H1 (cell line): ENCODE measurements at regions of chr20 and their contacts with region 1.

Region 1: GRCh38 chr20:54103067-54103761 is 32.8 kb upstream of the BCAS1 start:
- DNase-seq: peak; percentile 41 to 95
- H3K4me3 ChIP-seq: no peak overlapping the region
- H3K27ac ChIP-seq: no peak overlapping the region
- H3K4me1 ChIP-seq: no peaks in the 10 kb centered on the region
- H3K27me3 ChIP-seq: peaks cover 0 to 1% (median 0%) of the 10 kb centered on the region in 4 experiments; a peak in 1 of 7 replicates
- CTCF ChIP-seq: peak; percentile 82 to 91 (median 85)
- EP300 ChIP-seq: no peak
- POLR2A ChIP-seq: no peak
- RAD21 ChIP-seq: peak; percentile 64 to 72

Region 2: DNA sequence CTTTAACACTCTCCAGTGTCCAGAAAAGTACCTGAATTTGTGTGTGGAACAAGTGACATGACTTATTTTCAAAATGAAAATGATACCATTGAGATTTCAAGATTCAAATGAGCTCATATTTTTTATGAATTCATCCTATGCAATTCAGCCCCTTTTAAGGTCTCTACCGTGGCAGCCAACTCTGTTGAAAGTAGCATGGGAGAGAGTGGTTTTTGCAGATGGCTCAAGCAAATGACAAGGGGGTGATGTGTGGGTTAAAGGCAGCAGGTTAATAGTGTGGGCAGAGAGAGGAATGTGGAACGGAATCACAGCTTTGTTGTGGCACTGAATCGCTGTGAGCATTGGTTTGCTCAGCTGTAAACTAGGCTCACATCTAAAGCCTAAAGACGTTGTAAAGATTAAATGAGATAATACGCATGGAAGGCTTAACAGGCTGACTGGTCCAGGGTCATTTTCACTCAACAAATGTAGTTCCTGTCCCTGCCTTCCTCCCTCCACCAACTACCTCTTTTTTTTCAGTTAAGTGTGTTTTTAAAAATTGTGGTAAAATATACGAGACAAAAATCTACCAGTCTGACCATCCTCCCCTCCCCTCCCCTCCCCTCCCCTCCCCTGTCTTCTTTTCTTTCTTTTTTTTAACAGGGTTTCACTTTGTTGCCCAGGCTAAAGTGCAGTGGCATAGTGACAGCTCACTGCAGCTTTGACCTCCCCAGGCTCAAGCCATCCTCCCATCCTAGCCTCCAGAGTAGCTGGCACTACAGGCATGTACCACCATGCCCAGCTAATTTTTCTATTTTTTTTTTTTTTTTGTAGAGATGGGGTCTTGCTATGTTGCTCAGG is 394.9 kb before region 1 on chr20:
- CTCF ChIA-PET with region 1: no interaction called
- POLR2A ChIA-PET with region 1: no interaction called
- DNase-seq: no peak
- H3K4me3 ChIP-seq: no peak overlapping the region
- H3K27ac ChIP-seq: no peak overlapping the region
- H3K4me1 ChIP-seq: peaks cover 6 to 21% (median 14%) of the 10 kb centered on the region in 4 experiments
- H3K27me3 ChIP-seq: no peaks in the 10 kb centered on the region; a peak in 1 of 7 replicates
- CTCF ChIP-seq: no peak
- EP300 ChIP-seq: no peak
- POLR2A ChIP-seq: no peak
- RAD21 ChIP-seq: no peak

Region 3: GRCh38 chr20:54126809-54127655 is 23.8 kb after region 1 on chr20:
- CTCF ChIA-PET with region 1: interaction called, 11 read pairs
- POLR2A ChIA-PET with region 1: interaction called, 3 read pairs
- DNase-seq: no peak
- H3K4me3 ChIP-seq: no peak overlapping the region
- H3K27ac ChIP-seq: no peak overlapping the region
- H3K4me1 ChIP-seq: peaks cover 0 to 6% (median 2%) of the 10 kb centered on the region in 4 experiments; a peak in 4 of 7 replicates
- H3K27me3 ChIP-seq: no peaks in the 10 kb centered on the region
- CTCF ChIP-seq: no peak
- EP300 ChIP-seq: no peak
- POLR2A ChIP-seq: no peak
- RAD21 ChIP-seq: no peak

Region 4: DNA sequence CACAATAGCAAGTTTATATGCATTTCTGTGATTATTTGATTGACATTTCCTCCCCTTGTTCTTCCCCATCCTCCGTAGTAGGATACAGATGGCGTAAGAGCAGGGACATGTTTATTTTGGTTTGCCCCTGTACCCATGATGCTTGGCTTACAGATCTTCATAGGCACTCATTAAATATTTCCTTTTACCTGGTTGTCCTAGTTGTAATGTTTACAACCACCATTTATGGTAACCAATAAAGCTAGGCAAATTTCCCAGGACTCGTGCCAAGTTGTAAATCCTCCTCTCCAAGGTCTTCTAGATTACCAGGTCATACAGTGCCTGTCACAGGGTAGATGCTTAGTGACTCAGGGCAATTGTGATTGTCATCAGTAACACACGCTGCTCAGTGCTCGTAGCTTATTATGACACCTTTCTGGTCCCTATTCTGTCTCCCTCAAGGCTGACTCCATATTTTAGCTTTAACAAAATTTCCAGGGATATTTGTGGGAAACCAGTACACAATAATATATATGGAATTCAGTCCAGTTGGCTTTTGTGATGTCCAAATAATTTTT is 45.8 kb after region 1 on chr20:
- CTCF ChIA-PET with region 1: interaction called, 16 read pairs
- POLR2A ChIA-PET with region 1: no interaction called
- DNase-seq: no peak
- H3K4me3 ChIP-seq: no peak overlapping the region
- H3K27ac ChIP-seq: no peak overlapping the region
- H3K4me1 ChIP-seq: no peaks in the 10 kb centered on the region
- H3K27me3 ChIP-seq: no peaks in the 10 kb centered on the region
- CTCF ChIP-seq: no peak
- EP300 ChIP-seq: no peak
- POLR2A ChIP-seq: no peak
- RAD21 ChIP-seq: no peak

Region 5: GRCh38 chr20:54173653-54174456 is 70.6 kb after region 1 on chr20 and contains the start of gene CYP24A1:
- CTCF ChIA-PET with region 1: interaction called, 24 read pairs
- POLR2A ChIA-PET with region 1: no interaction called
- DNase-seq: peak in 1 of 2 experiments; percentile 78
- H3K4me3 ChIP-seq: peak within 1 kb of the TSS; percentile 26 to 58 (median 44); a peak in 7 of 8 replicates
- H3K27ac ChIP-seq: no peak within 1 kb of the TSS
- H3K4me1 ChIP-seq: peaks cover 4 to 16% (median 9%) of the 10 kb centered on the region in 4 experiments; a peak in 6 of 7 replicates
- H3K27me3 ChIP-seq: peaks cover 32 to 55% (median 52%) of the 10 kb centered on the region in 4 experiments
- CTCF ChIP-seq: no peak
- EP300 ChIP-seq: no peak
- POLR2A ChIP-seq: no peak
- RAD21 ChIP-seq: no peak
- total RNA-seq, gene CYP24A1: not detected in 2 replicates

Region 6: GRCh38 chr20:54188132-54188849 is 85.1 kb after region 1 on chr20:
- CTCF ChIA-PET with region 1: interaction called, 591 read pairs
- POLR2A ChIA-PET with region 1: no interaction called
- DNase-seq: no peak
- H3K4me3 ChIP-seq: no peak overlapping the region
- H3K27ac ChIP-seq: no peak overlapping the region
- H3K4me1 ChIP-seq: no peaks in the 10 kb centered on the region
- H3K27me3 ChIP-seq: no peaks in the 10 kb centered on the region
- CTCF ChIP-seq: no peak
- EP300 ChIP-seq: no peak
- POLR2A ChIP-seq: no peak
- RAD21 ChIP-seq: no peak